Activated CD8-positive, alpha-beta T cell treated with anti-CD3 and anti-CD28 coated beads for 36 hours (primary cell): ENCODE measurements at regions of chr11 and their contacts with region 1.

Region 1: DNA sequence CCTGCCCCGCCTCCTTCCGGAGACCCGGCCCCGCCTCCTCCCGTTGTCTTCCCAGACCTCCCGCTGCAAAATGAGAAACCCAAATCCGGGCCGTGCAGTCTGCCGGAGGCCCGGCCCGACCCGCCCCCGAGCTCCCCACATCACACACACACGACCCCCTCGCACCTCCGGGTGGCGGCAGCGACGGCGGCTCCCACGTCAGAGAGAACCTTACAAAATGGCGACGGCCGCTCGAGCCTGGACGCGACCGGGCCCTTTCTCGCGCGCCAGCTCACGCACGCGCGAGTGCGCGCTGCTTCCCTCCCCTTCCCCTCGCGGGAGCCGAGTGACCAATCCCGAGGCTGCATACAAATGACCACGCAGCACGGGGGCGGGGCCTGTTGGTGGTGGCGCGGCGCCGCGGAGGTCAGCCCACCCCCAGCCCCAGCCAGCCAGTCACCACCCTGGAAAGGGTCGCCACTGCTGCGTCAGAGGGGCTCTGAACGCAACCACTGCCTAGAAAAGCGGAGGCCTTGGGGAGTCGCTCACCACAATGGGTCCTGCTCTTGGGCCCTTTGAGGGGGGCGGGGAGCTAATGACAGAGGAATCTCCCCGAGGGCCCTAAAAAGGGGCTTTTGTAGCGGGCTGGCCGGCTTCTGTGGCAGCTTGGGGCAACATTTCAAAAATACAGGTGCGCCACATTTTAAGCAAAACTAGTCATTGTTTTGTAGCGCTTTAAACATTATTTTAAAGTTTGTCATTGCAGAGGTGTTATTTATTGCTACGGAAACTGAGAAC is at the start of gene RBM4B:
- DNase-seq: peak; percentile 98
- ATAC-seq: peak; percentile 93
- H3K4me3 Mint-ChIP-seq: peak within 1 kb of the TSS; percentile 88
- H3K27ac Mint-ChIP-seq: peak within 1 kb of the TSS; percentile 97
- H3K4me1 Mint-ChIP-seq: peaks cover 31% of the 10 kb centered on the region
- H3K27me3 Mint-ChIP-seq: no peaks in the 10 kb centered on the region
- CTCF ChIP-seq: no peak
- total RNA-seq, gene RBM4B: 10.7 to 13.1 TPM

Region 2: DNA sequence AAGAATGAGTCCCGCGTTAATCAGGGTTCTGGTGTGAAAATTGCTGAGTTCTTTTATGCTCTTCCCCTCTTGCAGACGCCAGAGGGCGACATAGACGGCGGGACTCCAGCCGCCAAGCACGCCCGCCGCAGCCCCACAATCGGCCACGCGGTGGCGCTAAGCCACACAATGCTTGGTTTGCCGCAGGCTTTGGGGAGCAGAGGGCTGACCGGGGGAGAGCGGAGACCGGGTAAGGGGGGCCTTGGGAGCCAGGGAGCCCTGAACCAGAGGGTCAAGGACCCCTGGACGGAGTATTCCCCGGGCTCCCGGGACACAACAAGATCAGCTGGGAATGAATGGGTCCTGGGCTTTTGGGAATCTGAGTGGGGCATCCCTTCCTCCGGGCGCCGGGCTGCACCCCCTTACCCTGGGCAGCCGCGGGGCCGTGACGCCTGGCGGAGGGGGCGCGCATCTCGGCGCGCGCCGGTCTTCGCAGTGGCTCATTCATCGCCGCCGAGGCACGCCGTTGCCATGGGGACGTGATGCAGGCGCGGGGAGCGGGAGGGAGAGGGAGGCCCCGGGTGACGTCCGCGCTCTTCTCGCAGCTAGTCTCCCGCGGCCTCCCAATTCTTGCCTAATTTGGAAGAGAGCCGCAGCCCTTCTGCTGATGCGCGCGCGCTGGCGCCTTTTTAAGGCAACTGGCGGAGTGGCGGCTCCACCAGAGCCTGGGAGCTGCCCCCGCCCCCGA is 269.1 kb before region 1 on chr11:
- CTCF ChIA-PET with region 1: interaction called, 30 read pairs
- POLR2A ChIA-PET with region 1: interaction called, 5 read pairs
- intact Hi-C with region 1: loop called (anchors 10 kb)
- DNase-seq: peak; percentile 95
- ATAC-seq: peak; percentile 86
- H3K4me3 Mint-ChIP-seq: peak overlapping the region; percentile 67
- H3K27ac Mint-ChIP-seq: no peak overlapping the region
- H3K4me1 Mint-ChIP-seq: peaks cover 3% of the 10 kb centered on the region
- H3K27me3 Mint-ChIP-seq: peaks cover 20% of the 10 kb centered on the region
- CTCF ChIP-seq: peak; percentile 100

Region 3: DNA sequence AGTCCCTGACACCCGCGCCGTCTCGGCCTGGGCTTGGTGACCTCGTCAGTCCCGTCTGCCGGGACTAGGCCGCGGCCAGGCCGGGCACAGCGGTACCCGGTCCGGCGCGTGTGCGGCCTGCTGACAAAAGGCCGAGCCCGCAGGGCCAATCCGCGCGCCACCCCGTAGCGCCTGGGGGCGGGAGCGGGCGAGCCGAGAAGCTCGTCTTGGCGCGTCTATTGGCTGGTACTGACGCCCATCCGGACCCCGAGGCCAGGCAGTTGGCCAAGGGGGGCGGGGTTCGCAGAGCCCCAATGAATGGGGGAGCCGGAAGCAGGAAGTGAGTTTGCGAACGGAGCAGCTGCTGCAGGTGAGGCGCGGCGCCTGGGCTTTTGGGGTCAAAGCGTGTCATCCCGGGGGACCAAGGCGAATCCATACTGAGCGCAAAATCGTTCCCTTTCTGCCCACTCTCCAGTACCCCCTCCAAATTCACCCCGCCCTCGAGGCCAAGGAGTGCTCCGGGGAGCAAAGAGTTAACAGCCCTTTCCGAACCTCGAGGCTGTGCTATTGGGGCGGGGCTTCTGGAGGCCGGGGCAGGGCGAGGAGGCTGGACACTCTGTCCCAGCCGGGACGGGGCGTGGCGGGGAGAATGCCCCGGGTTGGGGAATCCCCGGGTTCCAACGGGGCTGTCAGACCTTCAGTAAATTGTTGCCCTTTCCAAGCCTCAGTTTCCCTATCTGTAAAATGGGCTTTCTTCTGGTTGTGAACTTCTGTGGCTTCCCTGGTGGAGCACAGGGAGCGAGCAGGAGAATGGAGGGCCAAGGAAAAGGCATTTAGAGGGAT is 197.5 kb before region 1 on chr11 and contains the start of gene DPP3:
- CTCF ChIA-PET with region 1: interaction called, 12 read pairs
- POLR2A ChIA-PET with region 1: no interaction called
- intact Hi-C with region 1: no loop called
- DNase-seq: peak; percentile 98
- ATAC-seq: peak; percentile 98
- H3K4me3 Mint-ChIP-seq: peak within 1 kb of the TSS; percentile 83
- H3K27ac Mint-ChIP-seq: peak within 1 kb of the TSS; percentile 91
- H3K4me1 Mint-ChIP-seq: peaks cover 29% of the 10 kb centered on the region
- H3K27me3 Mint-ChIP-seq: no peaks in the 10 kb centered on the region
- CTCF ChIP-seq: no peak
- total RNA-seq, gene DPP3: 72.4 to 75.8 TPM

Region 4: GRCh38 chr11:66579017-66579606 is 98.7 kb before region 1 on chr11:
- CTCF ChIA-PET with region 1: interaction called, 77 read pairs
- POLR2A ChIA-PET with region 1: interaction called, 10 read pairs
- intact Hi-C with region 1: loop called (anchors 2 kb)
- DNase-seq: peak; percentile 90
- ATAC-seq: peak; percentile 91
- H3K4me3 Mint-ChIP-seq: no peak overlapping the region
- H3K27ac Mint-ChIP-seq: no peak overlapping the region
- H3K4me1 Mint-ChIP-seq: peaks cover 16% of the 10 kb centered on the region
- H3K27me3 Mint-ChIP-seq: no peaks in the 10 kb centered on the region
- CTCF ChIP-seq: peak; percentile 90

Region 5: GRCh38 chr11:66638177-66639065 is 39.4 kb before region 1 on chr11 and contains the start of gene RBM4:
- CTCF ChIA-PET with region 1: interaction called, 29 read pairs
- POLR2A ChIA-PET with region 1: interaction called, 26 read pairs
- intact Hi-C with region 1: loop called (anchors 5 kb)
- DNase-seq: peak; percentile 99
- ATAC-seq: peak; percentile 95
- H3K4me3 Mint-ChIP-seq: peak within 1 kb of the TSS; percentile 83
- H3K27ac Mint-ChIP-seq: peak within 1 kb of the TSS; percentile 98
- H3K4me1 Mint-ChIP-seq: peaks cover 56% of the 10 kb centered on the region
- H3K27me3 Mint-ChIP-seq: no peaks in the 10 kb centered on the region
- CTCF ChIP-seq: no peak
- total RNA-seq, gene RBM4: 108 to 114 TPM

Region 6: GRCh38 chr11:66694732-66695207 is 17.0 kb after region 1 on chr11:
- CTCF ChIA-PET with region 1: interaction called, 21 read pairs
- POLR2A ChIA-PET with region 1: no interaction called
- intact Hi-C with region 1: no loop called
- DNase-seq: peak; percentile 91
- ATAC-seq: peak; percentile 97
- H3K4me3 Mint-ChIP-seq: no peak overlapping the region
- H3K27ac Mint-ChIP-seq: no peak overlapping the region
- H3K4me1 Mint-ChIP-seq: no peaks in the 10 kb centered on the region
- H3K27me3 Mint-ChIP-seq: no peaks in the 10 kb centered on the region
- CTCF ChIP-seq: peak; percentile 97

Region 7: GRCh38 chr11:67053896-67054842 is 376.4 kb after region 1 on chr11:
- CTCF ChIA-PET with region 1: no interaction called
- POLR2A ChIA-PET with region 1: no interaction called
- intact Hi-C with region 1: no loop called
- DNase-seq: peak; percentile 71
- ATAC-seq: peak; percentile 77
- H3K4me3 Mint-ChIP-seq: no peak overlapping the region
- H3K27ac Mint-ChIP-seq: no peak overlapping the region
- H3K4me1 Mint-ChIP-seq: peaks cover 15% of the 10 kb centered on the region
- H3K27me3 Mint-ChIP-seq: peaks cover 10% of the 10 kb centered on the region
- CTCF ChIP-seq: peak; percentile 68